ENCODE measurements at regions of chr9 and their contacts with region 1.

Region 1: DNA sequence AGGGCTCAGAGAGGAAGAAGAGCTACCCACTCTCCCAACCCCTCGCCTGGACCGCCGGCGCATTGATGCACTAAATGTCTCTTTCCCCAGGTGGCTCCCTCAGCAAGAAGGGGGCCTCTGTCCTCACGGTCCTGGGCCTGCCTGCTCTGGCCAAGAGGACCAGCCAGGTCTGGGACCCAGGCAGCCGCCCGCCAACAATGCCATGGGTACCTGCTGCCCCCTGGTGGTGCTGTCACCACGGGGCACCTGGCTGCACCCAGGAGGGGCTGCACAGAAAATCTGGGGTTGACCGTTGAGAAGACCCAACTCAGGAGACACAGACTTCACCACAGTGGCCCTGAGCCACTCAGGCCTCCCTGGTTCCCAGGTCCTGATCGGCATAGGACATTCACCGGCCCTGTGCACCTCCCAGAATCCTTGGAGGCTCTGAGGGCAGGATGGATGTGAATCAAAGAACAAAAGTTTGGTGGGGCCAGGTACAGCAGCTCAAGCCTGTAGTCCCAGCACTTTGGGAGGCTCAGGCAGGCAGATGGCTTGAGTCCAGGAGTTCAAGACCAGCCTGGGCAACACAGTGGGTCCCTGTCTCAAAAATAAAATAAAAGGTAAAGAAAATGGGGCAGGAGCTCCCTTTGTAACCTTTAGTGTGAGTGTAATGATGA is 2.4 kb upstream of the VAV2 start:
- DNase-seq: peak; percentile 91
- ATAC-seq: peak; percentile 81

Region 2: GRCh38 chr9:133792721-133793470 is 201.6 kb before region 1 on chr9:
- intact Hi-C with region 1: loop called (anchors 2 kb)
- DNase-seq: peak; percentile 91
- ATAC-seq: peak; percentile 90

Region 3: DNA sequence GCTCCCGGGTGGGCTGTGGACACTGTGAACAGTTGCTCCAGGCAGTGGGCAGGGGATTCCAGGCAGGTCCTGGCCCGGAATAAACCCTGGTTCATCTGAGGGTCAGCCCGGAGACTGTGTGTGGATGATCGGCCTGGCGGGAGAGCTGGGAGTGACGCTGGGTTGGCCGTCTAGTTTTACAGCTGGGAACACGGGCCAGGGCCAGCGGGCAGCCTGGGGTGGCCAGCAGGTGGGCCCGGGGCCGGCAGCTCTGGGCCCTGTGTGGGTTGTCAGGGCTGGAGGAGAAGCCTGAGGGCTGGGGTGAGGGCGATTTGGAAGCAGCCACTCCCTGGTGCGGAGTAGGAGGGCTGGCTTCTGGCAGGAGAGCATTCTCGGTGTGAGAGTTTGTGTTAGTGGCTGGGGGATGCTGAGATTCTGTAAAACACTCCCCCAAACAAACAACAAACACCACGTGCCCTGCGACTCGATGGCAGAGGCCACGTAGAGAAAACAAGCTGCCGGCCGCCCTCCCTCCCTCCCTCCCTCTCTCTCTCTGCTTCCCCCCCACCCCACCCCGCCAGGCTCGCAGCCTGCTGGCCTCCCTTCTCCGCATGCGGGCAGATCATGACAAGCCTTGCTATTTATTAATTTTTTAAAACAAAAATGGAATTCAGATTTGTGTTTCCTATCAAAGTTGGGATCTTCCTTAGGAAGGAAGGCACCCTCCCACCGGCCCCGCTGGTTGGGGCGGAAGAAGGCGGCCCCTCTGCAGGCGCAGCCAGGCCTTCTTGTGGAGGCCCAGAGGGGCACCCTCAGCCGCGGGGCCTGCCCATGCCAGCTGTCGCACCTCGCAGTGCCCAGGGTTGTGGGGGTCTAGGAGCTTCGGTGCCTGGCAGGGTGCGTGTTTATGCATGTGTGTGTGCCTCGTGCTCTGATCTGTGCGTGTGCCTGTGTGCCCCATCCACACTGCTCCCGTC is 381.2 kb after region 1 on chr9:
- intact Hi-C with region 1: no loop called
- DNase-seq: no peak
- ATAC-seq: peak; percentile 59

Measured in sciatic nerve (tissue), 2 donors.